ENCODE measurements at regions of chr14 and their contacts with region 1.

Region 1: DNA sequence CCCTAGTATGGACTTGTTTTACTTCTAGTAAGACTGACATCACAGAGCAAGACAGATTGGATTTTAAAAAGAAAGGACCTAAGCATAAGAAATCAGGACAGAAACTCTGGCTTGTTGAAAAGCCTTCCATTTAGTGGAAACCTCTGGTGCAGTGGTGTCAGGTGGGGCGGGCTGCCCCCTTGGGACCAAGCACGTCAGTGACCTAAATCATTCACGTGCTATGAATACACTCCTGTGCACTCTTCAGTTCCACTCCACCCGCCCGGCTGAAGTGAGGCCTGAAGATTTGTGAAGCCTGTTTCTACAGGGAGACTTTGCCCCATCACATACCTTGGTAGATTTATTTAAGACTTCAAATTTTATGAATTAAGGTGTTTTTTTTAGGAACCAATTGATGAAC is 58.2 kb upstream of the STRN3 start:
- DNase-seq: peak; percentile 42
- ATAC-seq: peak; percentile 77
- H3K4me3 ChIP-seq: no peak overlapping the region
- H3K27ac ChIP-seq: no peak overlapping the region
- H3K4me1 ChIP-seq: 0 out of 2 replicates have a peak, but pooled peaks cover 7% of the 10 kb centered on the region
- H3K27me3 ChIP-seq: no peaks in the 10 kb centered on the region
- CTCF ChIP-seq: peak; percentile 55
- EP300 ChIP-seq: no peak
- POLR2A ChIP-seq: no peak
- RAD21 ChIP-seq: peak; percentile 51

Region 2: DNA sequence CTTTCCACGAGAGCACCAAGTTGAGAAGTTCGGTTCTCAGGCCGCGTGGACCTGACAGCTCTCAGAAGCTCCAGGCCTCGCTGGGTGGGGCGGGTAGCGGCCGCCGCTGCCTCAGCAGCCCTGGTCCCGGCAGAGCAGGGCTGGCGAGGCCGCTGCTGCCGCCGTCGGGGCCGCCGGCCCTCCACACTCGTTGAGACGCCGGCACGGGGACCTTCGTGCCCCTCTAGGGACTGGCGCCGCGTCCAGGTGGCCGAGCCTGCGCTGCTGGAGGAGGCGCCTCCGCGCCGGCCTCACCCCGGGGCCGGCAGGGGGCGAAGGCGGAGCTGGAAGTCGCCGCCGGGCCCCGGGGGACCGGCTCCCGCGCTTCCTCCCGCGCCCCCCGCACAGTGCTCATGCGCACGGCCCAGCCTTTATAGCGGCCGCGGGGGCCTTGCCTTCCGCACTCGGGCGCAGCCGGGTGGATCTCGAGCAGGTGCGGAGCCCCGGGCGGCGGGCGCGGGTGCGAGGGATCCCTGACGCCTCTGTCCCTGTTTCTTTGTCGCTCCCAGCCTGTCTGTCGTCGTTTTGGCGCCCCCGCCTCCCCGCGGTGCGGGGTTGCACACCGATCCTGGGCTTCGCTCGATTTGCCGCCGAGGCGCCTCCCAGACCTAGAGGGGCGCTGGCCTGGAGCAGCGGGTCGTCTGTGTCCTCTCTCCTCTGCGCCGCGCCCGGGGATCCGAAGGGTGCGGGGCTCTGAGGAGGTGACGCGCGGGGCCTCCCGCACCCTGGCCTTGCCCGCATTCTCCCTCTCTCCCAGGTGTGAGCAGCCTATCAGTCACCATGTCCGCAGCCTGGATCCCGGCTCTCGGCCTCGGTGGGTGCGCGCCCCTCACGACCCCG is 210.0 kb before region 1 on chr14 and contains the start of gene COCH:
- CTCF ChIA-PET with region 1: no interaction called
- POLR2A ChIA-PET with region 1: no interaction called
- in situ Hi-C with region 1: no loop called
- intact Hi-C with region 1: loop called (anchors 2 kb)
- DNase-seq: peak; percentile 71
- ATAC-seq: peak; percentile 92
- H3K4me3 ChIP-seq: peak within 1 kb of the TSS; percentile 71 to 89 (median 79)
- H3K27ac ChIP-seq: no peak within 1 kb of the TSS
- H3K4me1 ChIP-seq: peaks cover 29% of the 10 kb centered on the region
- H3K27me3 ChIP-seq: peaks cover 0 to 32% of the 10 kb centered on the region in 2 experiments; a peak in 4 of 5 replicates
- CTCF ChIP-seq: peak; percentile 72
- EP300 ChIP-seq: peak in 1 of 2 experiments; percentile 31; a peak in 1 of 4 replicates
- POLR2A ChIP-seq: peak in 1 of 2 experiments; percentile 86; a peak in 2 of 4 replicates
- RAD21 ChIP-seq: peak; percentile 95
- total RNA-seq, gene COCH: 46.1 and 79.3 TPM in 2 replicates

Region 3: GRCh38 chr14:30935445-30935844 is 148.9 kb before region 1 on chr14:
- CTCF ChIA-PET with region 1: no interaction called
- POLR2A ChIA-PET with region 1: no interaction called
- in situ Hi-C with region 1: no loop called
- intact Hi-C with region 1: loop called (anchors 5 kb)
- DNase-seq: no peak
- ATAC-seq: no peak
- H3K4me3 ChIP-seq: no peak overlapping the region
- H3K27ac ChIP-seq: no peak overlapping the region
- H3K4me1 ChIP-seq: no peaks in the 10 kb centered on the region
- H3K27me3 ChIP-seq: no peaks in the 10 kb centered on the region
- CTCF ChIP-seq: no peak
- EP300 ChIP-seq: no peak
- POLR2A ChIP-seq: no peak
- RAD21 ChIP-seq: no peak

Region 4: GRCh38 chr14:30982533-30982932 is 101.9 kb before region 1 on chr14:
- CTCF ChIA-PET with region 1: interaction called, 102 read pairs
- POLR2A ChIA-PET with region 1: no interaction called
- in situ Hi-C with region 1: loop called (anchors 5 kb)
- intact Hi-C with region 1: loop called (anchors 1 kb)
- DNase-seq: no peak
- ATAC-seq: no peak
- H3K4me3 ChIP-seq: no peak overlapping the region
- H3K27ac ChIP-seq: no peak overlapping the region
- H3K4me1 ChIP-seq: peaks cover 17% of the 10 kb centered on the region
- H3K27me3 ChIP-seq: no peaks in the 10 kb centered on the region
- CTCF ChIP-seq: no peak
- EP300 ChIP-seq: no peak
- POLR2A ChIP-seq: no peak
- RAD21 ChIP-seq: no peak

Region 5: GRCh38 chr14:31038521-31039166 is 45.7 kb before region 1 on chr14:
- CTCF ChIA-PET with region 1: interaction called, 3 read pairs
- POLR2A ChIA-PET with region 1: interaction called, 10 read pairs
- in situ Hi-C with region 1: no loop called
- intact Hi-C with region 1: loop called (anchors 1 kb)
- DNase-seq: peak; percentile 82
- ATAC-seq: peak; percentile 49
- H3K4me3 ChIP-seq: no peak overlapping the region
- H3K27ac ChIP-seq: peak overlapping the region; percentile 48
- H3K4me1 ChIP-seq: peaks cover 38% of the 10 kb centered on the region
- H3K27me3 ChIP-seq: no peaks in the 10 kb centered on the region
- CTCF ChIP-seq: no peak
- EP300 ChIP-seq: peak in 1 of 2 experiments; percentile 68; a peak in 1 of 4 replicates
- POLR2A ChIP-seq: no peak
- RAD21 ChIP-seq: no peak

Region 6: GRCh38 chr14:31106768-31107167 is 22.4 kb after region 1 on chr14:
- CTCF ChIA-PET with region 1: no interaction called
- POLR2A ChIA-PET with region 1: no interaction called
- in situ Hi-C with region 1: no loop called
- intact Hi-C with region 1: no loop called
- DNase-seq: no peak
- ATAC-seq: no peak
- H3K4me3 ChIP-seq: no peak overlapping the region
- H3K27ac ChIP-seq: no peak overlapping the region
- H3K4me1 ChIP-seq: no peaks in the 10 kb centered on the region
- H3K27me3 ChIP-seq: no peaks in the 10 kb centered on the region
- CTCF ChIP-seq: no peak
- EP300 ChIP-seq: no peak
- POLR2A ChIP-seq: 0 out of 4 replicates have a peak, but pooled peaks of 1 of the 2 experiments have one; percentile 26
- RAD21 ChIP-seq: no peak

Region 7: GRCh38 chr14:32043624-32044023 is 959.2 kb after region 1 on chr14:
- CTCF ChIA-PET with region 1: no interaction called
- POLR2A ChIA-PET with region 1: no interaction called
- in situ Hi-C with region 1: no loop called
- intact Hi-C with region 1: no loop called
- DNase-seq: no peak
- ATAC-seq: no peak
- H3K4me3 ChIP-seq: no peak overlapping the region
- H3K27ac ChIP-seq: no peak overlapping the region
- H3K4me1 ChIP-seq: peaks cover 9% of the 10 kb centered on the region
- H3K27me3 ChIP-seq: no peaks in the 10 kb centered on the region
- CTCF ChIP-seq: no peak
- EP300 ChIP-seq: no peak
- POLR2A ChIP-seq: no peak
- RAD21 ChIP-seq: no peak

Measured in HepG2 (cell line).